Prostate gland (tissue), 2 donors: ENCODE measurements at regions of chr19 and their contacts with region 1.

Region 1: GRCh38 chr19:18007044-18007916 is 690 bp upstream of the ARRDC2 start:
- DNase-seq: peak; percentile 79
- H3K4me3 ChIP-seq: peak overlapping the region; percentile 28 to 37
- H3K27ac ChIP-seq: peak overlapping the region; percentile 73 to 87
- H3K4me1 ChIP-seq: peaks cover 2% of the 10 kb centered on the region
- H3K27me3 ChIP-seq: no peaks in the 10 kb centered on the region
- CTCF ChIP-seq: peak; percentile 95 to 99 (median 99)
- POLR2A ChIP-seq: peak; percentile 64

Region 2: GRCh38 chr19:17932485-17933338 is 74.6 kb before region 1 on chr19 and contains the start of gene CCDC124:
- intact Hi-C with region 1: no loop called
- DNase-seq: peak; percentile 87
- H3K4me3 ChIP-seq: peak within 1 kb of the TSS; percentile 83 to 86
- H3K27ac ChIP-seq: peak within 1 kb of the TSS; percentile 88 to 91
- H3K4me1 ChIP-seq: peaks cover 9% of the 10 kb centered on the region
- H3K27me3 ChIP-seq: no peaks in the 10 kb centered on the region
- CTCF ChIP-seq: peak; percentile 70 to 97 (median 93)
- POLR2A ChIP-seq: peak; percentile 78
- total RNA-seq, gene CCDC124: 48.7 to 52.2 TPM

Region 3: GRCh38 chr19:18058208-18059030 is 51.1 kb after region 1 on chr19:
- intact Hi-C with region 1: loop called (anchors 1 kb)
- DNase-seq: peak; percentile 70
- H3K4me3 ChIP-seq: no peak overlapping the region
- H3K27ac ChIP-seq: peak overlapping the region; percentile 68 to 74
- H3K4me1 ChIP-seq: no peaks in the 10 kb centered on the region
- H3K27me3 ChIP-seq: no peaks in the 10 kb centered on the region
- CTCF ChIP-seq: peak; percentile 97 to 98 (median 98)
- POLR2A ChIP-seq: no peak

Region 4: GRCh38 chr19:18117692-18118378 is 110.6 kb after region 1 on chr19:
- intact Hi-C with region 1: no loop called
- DNase-seq: peak; percentile 75
- H3K4me3 ChIP-seq: peak overlapping the region; percentile 70
- H3K27ac ChIP-seq: peak overlapping the region; percentile 75 to 80
- H3K4me1 ChIP-seq: peaks cover 6% of the 10 kb centered on the region
- H3K27me3 ChIP-seq: no peaks in the 10 kb centered on the region
- CTCF ChIP-seq: peak in 2 of 4 experiments; percentile 12
- POLR2A ChIP-seq: no peak

Region 5: DNA sequence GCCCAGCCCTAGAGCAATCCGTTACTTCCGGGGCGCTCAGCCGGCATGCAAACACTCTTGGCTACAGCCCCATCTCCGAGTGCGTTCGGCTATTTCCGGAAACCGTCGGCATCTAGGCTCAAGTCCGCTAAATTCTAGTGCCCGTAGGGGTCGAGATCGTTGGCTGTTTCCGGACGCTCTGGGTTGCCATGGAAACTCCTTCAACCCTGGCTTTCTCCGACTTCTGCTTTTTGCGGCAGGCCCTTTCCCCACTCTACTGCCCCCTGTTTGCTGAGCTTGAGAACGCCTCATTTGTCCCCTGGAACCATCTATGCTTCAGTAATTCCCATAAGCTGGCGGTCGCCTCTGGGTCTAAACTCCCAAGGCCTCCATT is 145.2 kb after region 1 on chr19:
- intact Hi-C with region 1: loop called (anchors 10 kb)
- DNase-seq: peak; percentile 94
- H3K4me3 ChIP-seq: peak overlapping the region; percentile 75 to 92
- H3K27ac ChIP-seq: peak overlapping the region; percentile 87 to 90
- H3K4me1 ChIP-seq: peaks cover 21% of the 10 kb centered on the region
- H3K27me3 ChIP-seq: no peaks in the 10 kb centered on the region
- CTCF ChIP-seq: peak; percentile 28 to 64 (median 50)
- POLR2A ChIP-seq: no peak